PC-9 (cell line): ENCODE measurements at regions of chr22 and their contacts with region 1.

Region 1: DNA sequence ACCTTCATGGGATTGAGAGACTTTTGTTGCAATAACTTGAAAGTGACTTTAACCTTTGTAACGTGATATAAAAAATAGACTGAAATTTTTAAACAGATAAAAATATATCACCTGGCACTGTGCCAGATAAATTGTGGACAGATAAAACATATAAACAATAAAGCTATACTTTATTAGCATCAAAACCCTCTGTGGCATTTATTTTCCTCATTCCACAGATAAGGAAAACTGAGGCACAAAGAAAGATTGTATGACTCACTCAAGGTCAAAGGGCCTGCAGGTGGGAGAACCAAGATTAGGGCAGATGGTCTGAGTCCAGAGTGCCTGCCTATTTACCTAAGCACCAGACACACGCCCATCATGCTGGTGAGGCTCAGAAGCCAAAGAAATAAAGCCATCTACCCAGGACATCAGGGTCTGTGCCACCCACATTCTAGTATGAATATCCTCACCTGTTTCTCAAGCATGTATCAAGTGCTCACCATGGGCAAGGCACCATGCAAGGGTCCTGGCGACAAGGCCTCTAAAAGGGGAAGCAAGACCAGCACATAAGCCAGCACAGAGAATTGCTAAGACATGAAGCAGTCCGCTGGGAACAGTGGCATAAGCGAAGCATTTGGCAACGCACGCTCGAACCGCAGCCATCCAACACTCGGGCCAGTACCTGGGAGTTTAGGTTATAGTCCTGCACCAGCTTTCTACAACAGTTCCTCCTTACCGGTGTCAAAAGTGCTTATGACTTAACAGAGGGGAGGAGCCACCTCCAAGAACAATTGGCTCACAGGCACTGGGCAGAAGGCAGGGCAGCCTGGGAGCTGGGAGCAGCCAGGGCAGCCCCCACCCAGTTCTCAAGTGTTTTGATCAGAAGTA is 17.6 kb downstream of the MYH9 start:
- DNase-seq: peak; percentile 80 to 93
- H3K4me3 ChIP-seq: peak overlapping the region; percentile 43
- H3K27ac ChIP-seq: peak overlapping the region; percentile 78
- H3K4me1 ChIP-seq: peaks cover 100% of the 10 kb centered on the region
- H3K27me3 ChIP-seq: no peaks in the 10 kb centered on the region
- CTCF ChIP-seq: no peak

Region 2: GRCh38 chr22:36298601-36299000 is 71.6 kb before region 1 on chr22:
- CTCF ChIA-PET with region 1: no interaction called
- POLR2A ChIA-PET with region 1: no interaction called
- intact Hi-C with region 1: no loop called
- DNase-seq: no peak
- H3K4me3 ChIP-seq: no peak overlapping the region
- H3K27ac ChIP-seq: no peak overlapping the region
- H3K4me1 ChIP-seq: 0 out of 2 replicates have a peak, but pooled peaks cover 4% of the 10 kb centered on the region
- H3K27me3 ChIP-seq: no peaks in the 10 kb centered on the region
- CTCF ChIP-seq: no peak

Region 3: GRCh38 chr22:36321797-36322601 is 48.2 kb before region 1 on chr22:
- CTCF ChIA-PET with region 1: no interaction called
- POLR2A ChIA-PET with region 1: no interaction called
- intact Hi-C with region 1: no loop called
- DNase-seq: no peak
- H3K4me3 ChIP-seq: no peak overlapping the region
- H3K27ac ChIP-seq: no peak overlapping the region
- H3K4me1 ChIP-seq: no peaks in the 10 kb centered on the region
- H3K27me3 ChIP-seq: no peaks in the 10 kb centered on the region
- CTCF ChIP-seq: no peak

Region 4: DNA sequence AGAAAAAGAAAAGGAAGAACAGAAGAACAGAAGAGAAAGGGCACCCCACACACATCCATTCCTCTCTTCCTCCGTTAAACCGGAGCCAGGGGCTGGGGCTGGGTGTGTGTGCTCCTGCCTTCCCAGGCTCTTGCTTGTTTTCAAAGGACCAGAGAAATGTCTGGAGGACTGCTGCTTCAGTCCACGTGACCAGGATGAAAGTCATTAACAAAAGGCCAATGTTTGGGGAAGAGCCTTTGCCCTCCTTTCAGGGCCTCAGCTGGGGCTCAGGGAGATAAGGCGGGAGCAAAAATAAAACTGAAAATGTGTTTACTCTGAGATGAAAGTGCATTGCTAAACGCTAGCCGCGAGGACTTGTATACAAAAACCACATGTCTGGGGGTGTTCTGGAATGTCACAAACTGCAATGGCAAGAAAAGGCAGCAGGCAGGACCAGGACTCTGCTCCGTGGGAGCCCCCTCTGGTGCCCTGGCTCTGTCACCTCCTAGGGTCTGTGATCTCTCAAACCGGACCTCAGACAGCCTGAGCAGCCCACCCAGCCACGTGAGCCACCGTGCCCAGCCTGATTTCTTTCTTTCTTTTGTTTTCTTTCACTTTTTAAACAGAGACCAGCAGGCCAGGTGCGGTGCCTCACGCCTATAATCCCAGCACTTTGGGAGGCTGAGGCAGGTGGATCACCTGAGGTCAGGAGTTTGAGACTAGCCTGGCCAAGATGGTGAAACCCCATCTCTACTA is 49.2 kb after region 1 on chr22:
- CTCF ChIA-PET with region 1: no interaction called
- POLR2A ChIA-PET with region 1: interaction called, 16 read pairs
- intact Hi-C with region 1: loop called (anchors 5 kb)
- DNase-seq: peak; percentile 44 to 93
- H3K4me3 ChIP-seq: peak overlapping the region; percentile 35; the same call in 1 of the 2 replicates
- H3K27ac ChIP-seq: peak overlapping the region; percentile 66
- H3K4me1 ChIP-seq: peaks cover 43% of the 10 kb centered on the region
- H3K27me3 ChIP-seq: no peaks in the 10 kb centered on the region
- CTCF ChIP-seq: no peak

Region 5: DNA sequence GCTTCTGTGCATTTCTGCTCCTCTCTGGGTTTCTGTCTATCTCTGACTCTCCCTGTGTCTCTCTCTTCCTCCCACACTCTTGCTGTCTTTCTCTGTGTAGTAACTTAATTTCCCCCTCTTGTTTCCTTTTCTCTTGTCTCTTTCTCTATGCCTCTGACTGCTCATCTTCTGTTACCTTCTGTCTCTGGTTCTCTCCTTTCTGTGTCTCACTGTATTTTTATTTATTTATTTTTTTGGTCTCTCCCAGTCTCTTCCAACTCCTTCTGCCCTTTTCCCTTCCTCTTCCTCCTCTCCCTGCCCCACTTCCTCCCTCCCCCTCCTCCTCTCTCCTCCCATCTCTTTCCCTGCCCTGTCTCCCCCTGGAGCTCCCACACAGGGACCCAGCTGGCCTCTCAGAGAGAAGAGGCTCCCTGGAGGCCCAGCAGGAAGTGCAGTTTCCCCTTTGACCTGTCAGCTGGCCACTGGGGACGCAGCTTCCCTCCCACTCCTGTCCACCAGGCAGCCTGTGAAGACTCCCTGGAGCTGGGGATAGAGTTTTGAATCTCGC is 55.9 kb after region 1 on chr22:
- CTCF ChIA-PET with region 1: no interaction called
- POLR2A ChIA-PET with region 1: interaction called, 28 read pairs
- intact Hi-C with region 1: no loop called
- DNase-seq: no peak
- H3K4me3 ChIP-seq: no peak overlapping the region
- H3K27ac ChIP-seq: no peak overlapping the region
- H3K4me1 ChIP-seq: peaks cover 17% of the 10 kb centered on the region
- H3K27me3 ChIP-seq: no peaks in the 10 kb centered on the region
- CTCF ChIP-seq: no peak

Region 6: DNA sequence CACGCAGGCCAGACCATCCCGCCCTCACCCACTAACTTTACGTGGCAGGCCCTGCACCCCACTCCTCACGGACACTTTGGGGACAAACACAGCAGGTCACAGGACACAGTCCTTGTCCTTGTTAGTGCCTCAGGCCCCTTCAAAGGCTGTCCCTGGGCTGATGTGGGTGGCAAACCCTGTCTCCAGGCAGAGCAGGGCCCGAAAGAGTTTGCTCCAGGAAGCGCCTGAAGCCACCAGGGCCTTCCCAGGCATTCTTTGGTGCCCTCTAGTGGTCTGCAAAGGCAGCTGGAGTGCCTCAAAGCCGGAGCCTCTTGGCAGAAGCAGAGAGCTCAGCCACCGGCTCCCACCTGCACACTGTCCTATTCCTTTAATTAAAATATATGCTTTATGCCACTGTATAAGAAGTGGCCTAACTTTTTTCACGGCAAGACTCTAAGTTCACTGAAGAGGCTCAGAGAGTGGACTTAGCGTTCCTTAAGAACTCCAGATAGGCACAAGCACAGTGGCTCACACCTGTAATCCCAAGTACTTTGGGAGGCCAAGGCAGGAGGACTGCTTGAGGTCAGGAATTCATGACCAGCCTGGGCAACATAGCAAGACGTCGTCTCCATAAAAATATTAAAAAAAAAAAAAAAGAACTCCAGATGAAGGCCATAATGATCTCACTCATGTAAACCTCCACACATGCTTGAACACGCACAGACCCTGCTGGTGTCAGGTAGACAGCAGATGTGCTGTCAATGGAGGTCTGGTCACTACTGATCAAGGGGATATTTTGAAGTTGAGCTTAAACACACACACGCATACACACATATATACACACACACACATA is 100.2 kb after region 1 on chr22:
- CTCF ChIA-PET with region 1: interaction called, 3 read pairs
- POLR2A ChIA-PET with region 1: interaction called, 7 read pairs
- intact Hi-C with region 1: loop called (anchors 1 kb)
- DNase-seq: peak; percentile 77 to 86
- H3K4me3 ChIP-seq: no peak overlapping the region
- H3K27ac ChIP-seq: no peak overlapping the region
- H3K4me1 ChIP-seq: peaks cover 66% of the 10 kb centered on the region
- H3K27me3 ChIP-seq: no peaks in the 10 kb centered on the region
- CTCF ChIP-seq: peak; percentile 99